SK-N-SH (cell line): ENCODE measurements at regions of chr16 and their contacts with region 1.

Region 1: DNA sequence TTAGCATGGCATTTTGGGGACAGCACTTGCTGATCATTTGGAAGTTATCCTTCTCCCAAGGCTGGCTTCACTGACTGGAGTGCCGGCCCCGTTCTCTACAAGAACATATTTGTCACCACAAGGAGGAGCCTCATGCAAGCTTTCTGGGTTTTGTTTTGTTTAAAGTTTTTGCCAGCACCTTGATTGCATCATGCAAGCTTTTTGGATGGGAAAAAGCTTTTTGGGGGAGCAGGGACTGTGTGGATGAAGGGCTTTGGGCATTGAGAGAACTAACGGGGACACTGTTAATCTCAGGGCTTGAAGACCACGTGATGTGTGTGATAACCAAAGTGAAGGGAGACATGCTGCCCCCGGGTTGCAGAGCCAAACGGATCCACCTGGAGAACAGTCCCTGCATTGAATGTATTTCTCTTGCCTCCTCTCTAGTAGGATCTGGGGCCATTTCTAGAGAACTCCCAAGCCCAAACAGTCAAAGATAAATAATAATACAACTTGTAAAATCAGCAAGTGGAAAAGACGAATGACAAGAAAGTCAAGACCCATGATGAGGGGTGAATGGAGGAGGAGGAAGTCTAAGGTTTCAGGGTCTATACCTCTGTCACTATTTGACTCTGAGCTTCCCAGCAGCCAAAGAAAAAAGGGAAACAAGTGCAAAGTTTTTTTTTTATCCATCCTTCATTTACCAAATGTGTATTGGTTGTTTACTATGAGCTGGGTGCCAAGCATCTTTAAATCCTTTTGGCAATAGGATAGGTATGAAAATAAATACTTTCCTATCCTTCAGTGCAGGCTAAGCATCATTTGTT is 17.2 kb downstream of the TMEM114 start:
- DNase-seq: peak; percentile 50
- H3K4me3 ChIP-seq: no peak overlapping the region; a peak in 1 of 4 replicates
- H3K27ac ChIP-seq: no peak overlapping the region
- H3K4me1 ChIP-seq: peaks cover 0 to 15% of the 10 kb centered on the region in 2 experiments; a peak in 2 of 4 replicates
- H3K27me3 ChIP-seq: peaks cover 6% of the 10 kb centered on the region; the same call in 1 of the 2 replicates
- CTCF ChIP-seq: peak; percentile 57
- EP300 ChIP-seq: no peak
- RAD21 ChIP-seq: peak; percentile 72

Region 2: DNA sequence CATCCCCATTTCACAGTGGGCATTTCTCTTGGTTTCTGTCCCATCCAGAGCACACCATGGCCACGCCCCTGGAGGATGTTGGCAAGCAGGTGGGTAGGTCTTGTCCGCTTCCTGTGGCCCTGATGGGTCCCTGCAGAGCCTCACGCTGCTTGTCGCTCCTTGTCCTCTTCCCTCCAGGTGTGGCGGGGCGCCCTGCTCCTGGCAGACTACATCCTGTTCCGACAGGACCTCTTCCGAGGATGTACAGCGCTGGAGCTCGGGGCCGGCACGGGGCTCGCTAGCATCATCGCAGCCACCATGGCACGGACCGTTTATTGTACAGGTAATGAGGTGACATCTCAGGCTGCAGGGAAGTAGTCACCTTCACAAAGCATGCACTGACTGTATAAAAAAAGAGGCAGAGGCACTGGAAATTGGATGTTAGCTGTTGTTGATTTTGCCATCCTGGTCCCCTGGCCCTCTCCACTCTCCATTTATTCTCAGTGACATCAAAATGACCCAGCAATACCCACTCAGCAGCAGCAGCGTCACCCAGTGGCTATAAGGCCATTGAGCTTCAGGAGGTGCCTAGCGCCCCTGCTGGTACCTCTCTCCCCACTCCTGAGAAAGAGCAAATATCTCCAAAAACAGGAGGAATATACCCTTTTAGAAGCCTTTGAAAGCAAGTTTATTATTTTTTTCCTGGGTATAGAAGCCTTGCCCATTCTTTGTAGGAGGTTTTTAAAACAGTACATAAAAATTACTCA is 62.0 kb after region 1 on chr16:
- CTCF ChIA-PET with region 1: interaction called, 12 read pairs
- POLR2A ChIA-PET with region 1: no interaction called
- DNase-seq: peak; percentile 60
- H3K4me3 ChIP-seq: no peak overlapping the region; a peak in 1 of 4 replicates
- H3K27ac ChIP-seq: no peak overlapping the region; a peak in 1 of 4 replicates
- H3K4me1 ChIP-seq: peaks cover 0 to 5% of the 10 kb centered on the region in 2 experiments; a peak in 1 of 4 replicates
- H3K27me3 ChIP-seq: no peaks in the 10 kb centered on the region
- CTCF ChIP-seq: peak; percentile 70
- EP300 ChIP-seq: no peak
- RAD21 ChIP-seq: peak; percentile 61

Region 3: DNA sequence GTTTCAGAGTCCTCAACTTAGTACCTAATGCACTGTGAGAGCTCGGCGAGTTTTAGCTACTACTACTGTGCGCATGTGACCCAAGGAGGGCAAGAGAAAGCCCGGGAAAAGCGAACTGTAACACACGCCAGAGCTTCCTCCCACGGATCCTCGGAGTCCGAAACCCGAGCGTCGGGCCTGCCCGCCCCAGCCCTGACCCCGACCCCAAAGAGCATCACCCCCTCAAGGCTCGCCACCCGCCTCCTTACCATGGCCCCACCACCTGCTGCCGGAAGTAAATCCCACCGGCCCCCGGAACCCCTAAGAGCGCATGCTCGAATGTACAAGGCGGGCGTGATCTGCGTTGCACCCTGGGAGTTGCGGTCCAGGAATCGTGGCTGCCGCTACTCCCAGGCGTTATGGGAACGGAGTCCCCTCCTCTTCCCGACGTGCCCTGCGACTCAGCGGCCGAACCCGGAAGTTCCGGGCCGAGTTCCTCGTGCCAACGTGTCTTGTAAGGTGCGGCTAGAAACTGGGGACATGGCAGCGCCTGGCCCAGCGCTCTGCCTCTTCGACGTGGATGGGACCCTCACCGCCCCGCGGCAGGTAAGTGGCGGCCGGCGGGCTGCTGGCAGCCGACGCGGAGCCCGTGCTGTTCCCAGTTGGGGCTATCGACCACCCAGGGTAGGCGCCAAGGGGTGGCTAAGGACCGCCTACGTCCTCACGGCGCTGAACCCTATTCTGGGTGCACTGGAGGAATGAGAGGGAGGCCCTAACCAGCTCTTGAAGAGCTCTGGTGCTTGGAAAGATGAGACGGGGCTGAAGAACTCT is 224.4 kb after region 1 on chr16 and contains the starts of genes PMM2 and TMEM186:
- CTCF ChIA-PET with region 1: interaction called, 10 read pairs
- POLR2A ChIA-PET with region 1: no interaction called
- DNase-seq: peak; percentile 98
- H3K4me3 ChIP-seq: peak within 1 kb of the TSS; percentile 86 to 94
- H3K27ac ChIP-seq: peak within 1 kb of the TSS; percentile 78 to 88
- H3K4me1 ChIP-seq: peaks cover 0 to 27% of the 10 kb centered on the region in 2 experiments
- H3K27me3 ChIP-seq: no peaks in the 10 kb centered on the region
- CTCF ChIP-seq: no peak
- EP300 ChIP-seq: peak in 1 of 2 experiments; percentile 17; a peak in 1 of 4 replicates
- RAD21 ChIP-seq: no peak
- polyA plus RNA-seq, gene PMM2: 24.3 and 27.6 TPM in 2 replicates
- polyA plus RNA-seq, gene TMEM186: 13.2 and 18.2 TPM in 2 replicates